Psoas muscle (tissue), 8 donors: ENCODE measurements at regions of chr3 and their contacts with region 1.

Region 1: GRCh38 chr3:160801386-160802118 is 45.5 kb downstream of the PPM1L start:
- DNase-seq: peak; percentile 37 to 77
- ATAC-seq: peak; percentile 86 to 90 (median 88)
- H3K4me3 ChIP-seq: peak overlapping the region; percentile 50
- H3K27ac ChIP-seq: peak overlapping the region; percentile 93
- H3K4me1 ChIP-seq: peaks cover 70% of the 10 kb centered on the region
- H3K27me3 ChIP-seq: no peaks in the 10 kb centered on the region
- CTCF ChIP-seq: no peak

Region 2: GRCh38 chr3:160763073-160763472 is 38.5 kb before region 1 on chr3:
- intact Hi-C with region 1: loop called (anchors 5 kb)
- DNase-seq: no peak
- ATAC-seq: peak in 3 of 4 donors; percentile 46 to 75 (median 68)
- H3K4me3 ChIP-seq: no peak overlapping the region
- H3K27ac ChIP-seq: no peak overlapping the region
- H3K4me1 ChIP-seq: peaks cover 54% of the 10 kb centered on the region
- H3K27me3 ChIP-seq: no peaks in the 10 kb centered on the region
- CTCF ChIP-seq: no peak